Activated B cell treated with CpG ODN at 0.5 μM for 24 hours (primary cell): ENCODE measurements at regions of chr7 and their contacts with region 1.

Region 1: DNA sequence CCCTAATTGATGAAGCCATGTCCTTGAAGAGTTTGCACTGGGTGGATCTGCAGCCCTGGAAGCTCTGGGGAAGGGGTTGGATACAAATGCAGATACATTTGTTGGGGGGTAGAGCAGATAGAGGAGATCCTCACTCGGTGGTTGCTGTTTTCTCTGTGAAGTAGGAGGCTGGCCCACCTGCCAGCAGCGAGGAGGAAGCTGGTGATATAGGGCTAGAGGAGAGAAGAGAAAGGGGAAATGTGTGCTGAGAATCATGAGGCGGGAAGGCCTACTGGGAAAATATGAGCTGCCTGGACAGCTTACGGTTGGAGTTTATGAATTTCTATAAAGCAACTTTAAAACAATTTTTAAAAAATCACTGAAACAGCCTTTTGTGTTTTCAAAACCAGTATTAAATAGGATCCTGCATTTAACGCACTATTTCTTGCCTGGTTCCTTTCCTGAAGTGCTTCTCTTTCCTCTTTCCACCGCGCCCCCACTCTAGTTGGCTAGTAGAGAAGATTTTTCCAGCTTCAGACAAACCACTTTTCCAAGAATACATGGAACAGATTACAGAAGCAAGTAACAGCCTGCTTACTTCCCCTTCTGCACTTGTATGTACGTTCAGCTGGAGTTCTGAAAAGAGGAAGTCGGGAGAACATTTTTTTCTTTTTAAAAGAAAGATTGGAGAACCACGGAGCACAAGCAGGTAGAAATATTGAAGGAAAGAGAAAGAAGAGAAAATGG is 100.6 kb upstream of the GLCCI1 start:
- DNase-seq: no peak
- ATAC-seq: peak; percentile 72
- H3K4me3 Mint-ChIP-seq: no peak overlapping the region
- H3K27ac Mint-ChIP-seq: no peak overlapping the region
- H3K4me1 Mint-ChIP-seq: peaks cover 4% of the 10 kb centered on the region
- H3K27me3 Mint-ChIP-seq: no peaks in the 10 kb centered on the region
- CTCF ChIP-seq: no peak

Region 2: DNA sequence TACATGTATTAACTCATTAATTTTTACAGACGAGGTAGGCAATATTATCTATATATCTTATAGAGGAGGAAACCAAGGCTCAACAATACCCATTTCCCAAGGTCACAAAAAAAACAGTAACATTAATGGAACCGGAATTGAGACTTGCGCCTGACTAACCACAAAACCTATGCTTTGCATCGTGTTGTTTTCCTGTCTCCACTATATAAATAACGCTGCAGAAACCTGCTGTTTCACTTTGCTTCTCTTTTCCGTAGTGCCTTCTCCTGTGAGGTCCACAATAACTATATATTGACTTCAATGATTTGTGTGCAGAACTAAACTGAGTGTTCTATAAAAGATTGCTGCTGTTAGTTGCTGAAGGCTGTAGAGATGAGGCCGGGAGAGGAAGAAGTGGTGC is 51.9 kb before region 1 on chr7:
- CTCF ChIA-PET with region 1: no interaction called
- POLR2A ChIA-PET with region 1: no interaction called
- intact Hi-C with region 1: loop called (anchors 2 kb)
- DNase-seq: no peak
- ATAC-seq: peak; percentile 56
- H3K4me3 Mint-ChIP-seq: peak overlapping the region; percentile 67
- H3K27ac Mint-ChIP-seq: peak overlapping the region; percentile 82
- H3K4me1 Mint-ChIP-seq: peaks cover 71% of the 10 kb centered on the region
- H3K27me3 Mint-ChIP-seq: no peaks in the 10 kb centered on the region
- CTCF ChIP-seq: no peak

Region 3: GRCh38 chr7:7857143-7857583 is 10.8 kb before region 1 on chr7:
- CTCF ChIA-PET with region 1: interaction called, 3 read pairs
- POLR2A ChIA-PET with region 1: interaction called, 6 read pairs
- intact Hi-C with region 1: loop called (anchors 1 kb)
- DNase-seq: no peak
- ATAC-seq: peak; percentile 83
- H3K4me3 Mint-ChIP-seq: peak overlapping the region; percentile 63
- H3K27ac Mint-ChIP-seq: peak overlapping the region; percentile 90
- H3K4me1 Mint-ChIP-seq: peaks cover 32% of the 10 kb centered on the region
- H3K27me3 Mint-ChIP-seq: no peaks in the 10 kb centered on the region
- CTCF ChIP-seq: no peak

Region 4: DNA sequence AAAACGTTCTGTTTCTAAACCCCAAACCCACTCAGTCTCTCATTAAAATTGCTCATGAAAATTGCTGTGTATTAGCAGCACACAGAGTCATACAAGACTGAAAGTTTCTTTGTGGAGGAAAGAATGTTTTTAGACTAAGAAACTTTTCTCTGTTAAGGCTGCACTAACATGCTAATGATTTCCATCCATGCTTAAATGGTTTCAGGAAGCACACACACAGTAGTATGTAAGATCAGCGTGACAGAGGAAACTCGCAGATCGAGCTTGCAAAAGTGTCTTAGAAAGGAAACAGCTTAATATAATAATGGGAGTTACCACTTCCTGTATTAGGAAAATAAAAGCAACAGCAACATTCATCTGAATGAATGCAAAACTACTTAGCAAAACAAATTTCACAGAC is 281.2 kb after region 1 on chr7:
- CTCF ChIA-PET with region 1: no interaction called
- POLR2A ChIA-PET with region 1: no interaction called
- intact Hi-C with region 1: no loop called
- DNase-seq: no peak
- ATAC-seq: peak; percentile 62
- H3K4me3 Mint-ChIP-seq: peak overlapping the region; percentile 35
- H3K27ac Mint-ChIP-seq: peak overlapping the region; percentile 53
- H3K4me1 Mint-ChIP-seq: peaks cover 28% of the 10 kb centered on the region
- H3K27me3 Mint-ChIP-seq: no peaks in the 10 kb centered on the region
- CTCF ChIP-seq: no peak